ENCODE measurements at regions of chr9 and their contacts with region 1.

Region 1: GRCh38 chr9:96854073-96854876 is at the start of gene ZNF782:
- DNase-seq: peak; percentile 90
- CTCF ChIP-seq: no peak

Region 2: DNA sequence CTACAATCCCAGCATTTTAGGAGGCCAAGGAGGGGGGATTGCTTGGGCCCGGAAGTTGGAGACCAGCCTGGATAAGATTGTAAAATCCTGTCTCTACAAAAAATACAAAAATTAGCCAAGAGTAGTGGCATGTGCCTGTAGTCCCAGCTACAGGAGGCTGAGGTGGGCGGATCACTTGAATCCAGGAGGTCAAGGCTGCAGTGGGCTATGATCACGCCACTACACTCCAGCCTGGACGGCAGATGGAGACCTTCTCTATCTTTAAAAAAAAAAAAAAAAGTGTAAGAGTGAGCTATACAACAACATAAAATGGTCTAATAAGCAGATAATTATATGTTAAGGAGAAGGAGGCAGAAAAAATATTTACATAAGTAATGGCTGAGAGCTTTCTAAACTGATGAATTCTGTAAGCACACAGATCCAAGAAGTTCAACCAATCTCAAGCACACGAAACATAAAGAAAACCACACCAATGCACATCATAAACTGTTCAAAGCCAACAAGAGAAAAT is 257.6 kb before region 1 on chr9:
- in situ Hi-C with region 1: no loop called
- DNase-seq: no peak
- CTCF ChIP-seq: no peak

Region 3: GRCh38 chr9:97109194-97109811 is 255.0 kb after region 1 on chr9:
- in situ Hi-C with region 1: loop called (anchors 25 kb)
- DNase-seq: peak; percentile 34
- CTCF ChIP-seq: peak; percentile 76

Region 4: DNA sequence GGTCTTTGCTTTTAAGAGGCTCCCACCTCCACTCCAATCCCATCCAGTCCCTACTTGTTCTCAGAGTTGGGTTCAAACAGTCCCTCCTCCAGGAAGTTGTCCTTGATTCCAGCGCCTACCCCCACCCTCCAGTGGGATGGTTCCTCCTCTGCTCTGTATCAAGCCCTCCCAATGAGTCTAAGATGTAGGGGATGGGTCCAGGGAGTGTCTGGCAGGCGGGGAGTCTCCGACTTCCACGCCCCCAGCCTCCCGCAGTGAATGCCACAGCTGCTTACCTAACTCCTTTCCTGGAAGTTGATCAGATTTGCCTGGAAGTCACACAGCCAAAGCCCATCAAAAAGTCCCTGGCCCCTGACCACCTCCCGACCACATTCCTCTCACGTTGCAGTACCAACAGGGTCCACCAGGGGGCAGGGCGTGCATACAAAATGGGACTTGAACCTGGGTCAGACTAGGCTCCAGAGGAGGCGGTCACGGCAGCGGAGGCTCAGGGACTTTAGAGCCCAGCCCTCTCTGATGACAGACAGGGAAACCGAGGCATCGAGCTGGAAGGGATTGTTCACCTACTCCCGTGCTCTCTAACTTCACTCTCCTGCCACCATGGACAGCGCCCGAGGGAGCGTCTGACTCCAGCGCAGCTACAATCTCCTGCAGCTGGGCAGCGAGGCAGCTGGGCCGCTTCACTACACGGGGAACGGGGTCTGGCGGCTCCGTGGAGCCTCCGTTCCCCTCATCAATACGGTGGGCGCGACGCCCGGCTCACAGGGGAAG is 532.6 kb after region 1 on chr9:
- in situ Hi-C with region 1: loop called (anchors 25 kb)
- DNase-seq: peak; percentile 75
- CTCF ChIP-seq: peak; percentile 98

Region 5: GRCh38 chr9:97615439-97616072 is 761.3 kb after region 1 on chr9:
- in situ Hi-C with region 1: loop called (anchors 25 kb)
- DNase-seq: peak; percentile 61
- CTCF ChIP-seq: peak; percentile 74